ENCODE measurements at regions of chr1 and their contacts with region 1.

Region 1: DNA sequence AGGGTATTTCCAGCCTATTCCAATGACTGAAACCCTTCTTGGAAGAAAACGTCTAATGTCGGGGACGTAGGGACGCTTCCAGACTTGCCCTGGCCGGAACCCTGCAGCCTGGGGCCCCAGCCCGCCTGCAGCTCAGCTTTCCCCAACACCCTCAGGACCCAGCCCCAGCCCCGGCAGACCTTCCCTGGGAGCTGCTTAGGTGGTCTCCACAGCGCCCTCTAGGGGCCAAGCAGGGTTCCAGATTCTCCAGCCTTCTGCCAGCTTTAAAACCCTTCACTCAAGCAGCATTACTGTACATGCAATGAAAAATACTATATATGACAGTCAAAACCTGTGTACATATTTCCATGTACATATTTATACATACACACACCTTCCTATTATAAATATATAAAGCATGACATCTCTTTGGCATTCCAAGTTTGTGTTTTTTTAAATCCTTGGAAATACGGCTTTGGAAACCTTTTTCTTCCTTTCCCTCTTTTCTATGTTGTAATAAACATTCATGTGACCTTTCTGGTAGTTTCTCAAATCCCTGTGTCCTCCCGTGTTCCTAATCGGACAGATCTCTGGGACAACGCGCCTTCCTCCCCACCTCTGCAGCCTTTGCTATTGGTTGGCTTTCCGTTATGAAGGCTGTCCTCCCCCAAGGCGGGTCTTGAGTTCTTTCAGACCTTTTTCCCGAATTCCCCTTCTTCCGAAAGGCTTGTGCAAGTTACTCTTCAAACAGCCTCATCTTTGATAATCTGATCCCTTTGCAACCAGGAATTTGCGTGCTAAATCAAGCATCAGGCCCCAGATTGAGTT is 60.3 kb downstream of the STUM start:
- DNase-seq: peak; percentile 80
- H3K4me3 ChIP-seq: no peak overlapping the region
- H3K27ac ChIP-seq: no peak overlapping the region
- H3K4me1 ChIP-seq: no peaks in the 10 kb centered on the region
- CTCF ChIP-seq: peak; percentile 97

Region 2: DNA sequence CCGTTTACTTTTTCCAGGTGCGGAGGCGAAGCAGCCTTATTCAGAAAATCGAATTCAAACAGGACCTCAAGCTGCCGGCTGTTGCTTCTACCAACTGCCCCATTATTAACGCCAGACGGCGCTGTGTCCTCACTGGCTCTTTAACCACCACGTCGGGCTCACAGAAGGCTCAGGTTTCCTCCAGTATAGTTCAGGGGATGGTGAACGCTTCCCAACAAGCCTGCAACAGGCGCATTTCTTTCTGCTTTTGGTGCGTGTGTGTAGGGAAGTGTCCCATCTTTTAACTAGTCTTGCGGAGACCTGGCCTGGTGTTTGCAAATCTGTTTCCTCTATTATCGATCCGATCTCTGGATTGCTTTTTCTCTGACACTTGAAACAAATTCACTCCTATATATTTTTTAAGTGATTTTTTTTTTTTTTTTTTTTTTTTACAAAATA is 61.1 kb before region 1 on chr1:
- CTCF ChIA-PET with region 1: no interaction called
- POLR2A ChIA-PET with region 1: no interaction called
- intact Hi-C with region 1: loop called (anchors 5 kb)
- DNase-seq: peak; percentile 86
- H3K4me3 ChIP-seq: no peak overlapping the region
- H3K27ac ChIP-seq: no peak overlapping the region
- H3K4me1 ChIP-seq: peaks cover 20% of the 10 kb centered on the region
- CTCF ChIP-seq: peak; percentile 96

Region 3: DNA sequence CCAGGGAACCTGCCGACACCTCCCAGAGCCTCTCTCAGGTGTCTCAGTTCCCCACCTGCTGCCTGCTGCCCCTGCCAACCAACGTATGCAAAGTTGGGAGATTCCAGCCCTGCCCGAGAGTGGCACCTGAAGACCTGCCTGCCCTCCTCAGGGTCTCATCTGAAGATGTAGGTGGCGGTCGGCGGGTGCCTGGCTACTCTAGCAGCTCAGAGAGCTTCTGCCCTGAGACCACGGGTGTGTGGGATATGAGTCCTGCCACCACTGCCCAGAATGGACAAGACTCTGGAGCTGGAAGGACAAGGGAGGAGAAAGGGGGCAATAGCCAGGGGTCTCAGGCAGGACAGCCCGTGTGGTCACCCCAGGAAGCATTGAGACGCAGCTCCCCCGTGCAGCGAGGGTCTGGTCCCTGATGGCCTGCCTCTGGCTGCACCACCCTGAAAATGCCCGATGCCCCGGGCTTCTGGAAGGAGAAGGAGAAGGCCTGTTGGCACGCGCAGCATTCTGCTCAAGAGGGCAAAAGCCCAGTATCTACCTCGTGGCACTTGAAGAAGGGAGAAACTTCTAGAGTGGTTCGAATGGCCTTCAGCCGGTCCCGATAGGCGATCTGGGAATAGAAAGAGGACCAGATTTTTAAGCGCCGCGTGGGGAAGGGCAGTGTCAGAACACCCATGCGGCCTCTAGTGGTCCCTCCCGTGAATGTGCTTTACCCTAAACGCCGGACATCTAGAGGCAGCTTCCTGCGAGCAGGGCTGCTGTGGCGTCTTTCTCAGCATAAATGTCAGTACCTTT is 28.4 kb after region 1 on chr1:
- CTCF ChIA-PET with region 1: no interaction called
- POLR2A ChIA-PET with region 1: no interaction called
- intact Hi-C with region 1: no loop called
- DNase-seq: peak; percentile 42
- H3K4me3 ChIP-seq: no peak overlapping the region
- H3K27ac ChIP-seq: no peak overlapping the region
- H3K4me1 ChIP-seq: peaks cover 58% of the 10 kb centered on the region
- CTCF ChIP-seq: peak; percentile 71

Region 4: GRCh38 chr1:226662642-226663326 is 53.9 kb after region 1 on chr1:
- CTCF ChIA-PET with region 1: no interaction called
- POLR2A ChIA-PET with region 1: no interaction called
- intact Hi-C with region 1: no loop called
- DNase-seq: peak; percentile 98
- H3K4me3 ChIP-seq: peak overlapping the region; percentile 55
- H3K27ac ChIP-seq: no peak overlapping the region
- H3K4me1 ChIP-seq: peaks cover 48% of the 10 kb centered on the region
- CTCF ChIP-seq: no peak

Region 5: DNA sequence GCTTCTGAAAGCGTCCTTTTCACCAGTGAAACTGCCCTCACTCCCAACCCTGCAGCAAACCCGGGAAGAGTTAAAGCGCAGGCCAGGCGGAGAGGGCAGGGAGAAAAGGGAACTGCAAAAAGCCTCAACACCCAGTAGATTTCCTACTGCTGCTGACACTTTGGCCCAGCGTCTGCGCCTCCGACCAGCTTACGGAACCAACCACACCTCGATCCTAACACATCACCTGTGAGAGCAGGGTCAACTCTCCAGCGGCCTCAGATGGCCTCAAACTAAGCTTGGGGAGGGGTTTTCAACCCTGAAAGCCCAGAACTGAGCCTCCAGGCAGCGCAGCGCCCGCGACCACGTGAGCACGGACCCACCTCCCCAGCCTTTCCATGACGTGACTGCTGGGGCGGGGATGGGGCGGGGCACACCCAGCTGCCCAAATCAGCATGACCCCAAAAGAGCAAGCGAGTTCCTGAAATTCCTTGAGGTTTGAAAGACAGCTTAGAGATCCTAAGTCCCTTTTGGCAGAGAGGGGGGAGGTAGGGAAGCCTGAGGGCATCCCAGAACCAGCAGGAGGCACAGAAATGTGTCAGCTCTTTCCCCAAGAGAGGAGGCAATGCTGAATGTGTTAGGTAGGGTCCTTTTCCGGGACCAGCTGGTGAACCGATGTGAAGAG is 71.1 kb after region 1 on chr1:
- CTCF ChIA-PET with region 1: no interaction called
- POLR2A ChIA-PET with region 1: no interaction called
- intact Hi-C with region 1: no loop called
- DNase-seq: peak; percentile 84
- H3K4me3 ChIP-seq: peak overlapping the region; percentile 47
- H3K27ac ChIP-seq: peak overlapping the region; percentile 98
- H3K4me1 ChIP-seq: peaks cover 99% of the 10 kb centered on the region
- CTCF ChIP-seq: no peak

Region 6: GRCh38 chr1:227111782-227112181 is 502.9 kb after region 1 on chr1:
- CTCF ChIA-PET with region 1: no interaction called
- POLR2A ChIA-PET with region 1: no interaction called
- intact Hi-C with region 1: no loop called
- DNase-seq: no peak
- H3K4me3 ChIP-seq: no peak overlapping the region
- H3K27ac ChIP-seq: no peak overlapping the region
- H3K4me1 ChIP-seq: no peaks in the 10 kb centered on the region
- CTCF ChIP-seq: no peak